Heart right ventricle (tissue), 16 donors: ENCODE measurements at regions of chr9 and their contacts with region 1.

Region 1: DNA sequence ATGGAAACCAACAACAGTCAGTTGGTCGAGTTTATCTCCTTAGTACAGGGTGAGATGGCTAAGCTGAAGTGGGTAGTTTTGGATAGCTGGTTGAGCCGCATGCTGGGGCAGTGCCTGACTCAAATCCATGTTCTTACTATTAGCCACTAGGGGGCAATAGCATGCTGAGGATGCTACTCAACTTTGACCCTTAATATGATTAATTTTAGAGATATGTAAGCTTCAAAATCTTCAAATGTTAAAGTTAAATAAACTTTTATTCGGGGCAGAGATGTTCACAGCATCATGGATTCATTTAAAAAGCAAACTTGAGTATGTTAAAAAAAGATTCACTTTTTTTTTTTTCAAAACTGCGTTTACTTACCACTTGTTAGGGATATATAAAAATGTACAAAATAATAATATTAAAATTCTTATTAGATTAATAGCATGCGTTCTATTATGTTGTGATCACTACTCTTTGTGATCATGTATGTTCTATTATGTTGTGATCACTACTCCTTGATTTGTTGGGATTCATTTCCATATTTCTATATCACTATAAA is 57.0 kb downstream of the C9orf153 start:
- DNase-seq: peak in 1 of 2 donors; percentile 10
- ATAC-seq: peak in 5 of 8 donors; percentile 49 to 68 (median 66)
- H3K4me3 ChIP-seq: no peak overlapping the region
- H3K27ac ChIP-seq: no peak overlapping the region
- H3K4me1 ChIP-seq: peaks cover 0 to 17% (median 5%) of the 10 kb centered on the region in 9 donors
- H3K27me3 ChIP-seq: no peaks in the 10 kb centered on the region
- CTCF ChIP-seq: peak; percentile 59 to 86 (median 81)

Region 2: GRCh38 chr9:86246752-86247161 is 44.3 kb after region 1 on chr9:
- intact Hi-C with region 1: loop called in 2 of 10 experiments (anchors 5 to 10 kb)
- DNase-seq: peak; percentile 13 to 66
- ATAC-seq: peak; percentile 64 to 95 (median 78)
- H3K4me3 ChIP-seq: peak overlapping the region in 6 of 10 donors; percentile 3 to 28 (median 23)
- H3K27ac ChIP-seq: peak overlapping the region in 5 of 10 donors; percentile 26 to 55 (median 32)
- H3K4me1 ChIP-seq: peaks cover 0 to 21% (median 0%) of the 10 kb centered on the region in 9 donors
- H3K27me3 ChIP-seq: no peaks in the 10 kb centered on the region
- CTCF ChIP-seq: peak in 2 of 9 donors; percentile 31 to 49

Region 3: GRCh38 chr9:86275962-86276361 is 73.6 kb after region 1 on chr9:
- intact Hi-C with region 1: loop called in 3 of 10 experiments (anchors 5 kb)
- DNase-seq: no peak
- ATAC-seq: peak in 1 of 8 donors; percentile 14
- H3K4me3 ChIP-seq: no peak overlapping the region
- H3K27ac ChIP-seq: no peak overlapping the region
- H3K4me1 ChIP-seq: peaks cover 13 to 68% (median 53%) of the 10 kb centered on the region in 9 donors
- H3K27me3 ChIP-seq: no peaks in the 10 kb centered on the region
- CTCF ChIP-seq: peak in 5 of 9 donors; percentile 15 to 44 (median 29)

Region 4: GRCh38 chr9:86282077-86282978 is 79.9 kb after region 1 on chr9 and contains the start of gene ISCA1:
- intact Hi-C with region 1: loop called in 3 of 10 experiments (anchors 5 kb)
- DNase-seq: peak; percentile 98
- ATAC-seq: peak; percentile 96 to 98 (median 98)
- H3K4me3 ChIP-seq: peak within 1 kb of the TSS; percentile 60 to 96 (median 82)
- H3K27ac ChIP-seq: peak within 1 kb of the TSS; percentile 89 to 99 (median 97)
- H3K4me1 ChIP-seq: peaks cover 6 to 48% (median 38%) of the 10 kb centered on the region in 9 donors
- H3K27me3 ChIP-seq: no peaks in the 10 kb centered on the region
- CTCF ChIP-seq: no peak
- total RNA-seq, gene ISCA1: 50.7 to 86.1 (median 71.7) TPM

Region 5: DNA sequence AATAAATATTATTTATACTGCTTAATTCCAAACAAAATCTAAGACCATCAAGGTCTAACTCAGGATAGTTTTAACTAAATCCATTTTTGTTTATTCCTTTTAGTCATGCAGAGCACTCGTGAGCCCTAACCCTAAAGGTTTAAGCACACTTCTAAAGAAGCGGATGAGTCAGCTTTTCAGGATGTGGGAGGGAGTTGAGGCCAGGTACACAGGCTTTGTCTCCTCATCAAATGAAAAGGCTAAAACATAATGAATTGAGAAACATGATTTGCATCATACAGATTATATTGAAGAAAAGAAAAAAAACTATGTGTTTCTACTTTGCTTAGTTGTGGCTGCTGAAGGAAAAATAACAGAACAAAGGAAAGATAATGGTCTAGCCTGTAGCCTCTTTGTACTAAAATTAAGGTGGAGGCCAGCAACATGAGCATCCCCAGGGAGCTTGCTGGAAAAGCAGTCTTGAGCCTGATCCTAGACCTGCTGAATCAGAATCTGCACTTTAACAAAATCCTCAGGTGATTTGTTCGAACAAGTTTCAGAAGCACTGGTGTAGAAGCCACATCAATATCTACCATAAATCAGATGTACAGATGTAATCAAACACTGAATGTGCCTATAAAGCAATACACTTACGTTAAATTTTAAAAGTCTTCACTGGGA is 101.0 kb after region 1 on chr9:
- intact Hi-C with region 1: no loop called
- DNase-seq: no peak
- ATAC-seq: no peak
- H3K4me3 ChIP-seq: no peak overlapping the region
- H3K27ac ChIP-seq: no peak overlapping the region
- H3K4me1 ChIP-seq: peaks cover 0 to 4% (median 0%) of the 10 kb centered on the region in 9 donors
- H3K27me3 ChIP-seq: no peaks in the 10 kb centered on the region
- CTCF ChIP-seq: no peak